Ascending aorta (tissue), 2 donors: ENCODE measurements at regions of chr16 and their contacts with region 1.

Region 1: GRCh38 chr16:88856828-88857733 is at the starts of genes GALNS and TRAPPC2L:
- DNase-seq: peak; percentile 92 to 99
- H3K4me3 ChIP-seq: peak within 1 kb of the TSS; percentile 64 to 87
- H3K27ac ChIP-seq: peak within 1 kb of the TSS; percentile 54 to 66
- H3K4me1 ChIP-seq: peaks cover 13 to 14% of the 10 kb centered on the region in 2 donors
- H3K27me3 ChIP-seq: no peaks in the 10 kb centered on the region
- CTCF ChIP-seq: no peak
- total RNA-seq, gene GALNS: 62.2 TPM
- total RNA-seq, gene TRAPPC2L: 7.6 TPM

Region 2: DNA sequence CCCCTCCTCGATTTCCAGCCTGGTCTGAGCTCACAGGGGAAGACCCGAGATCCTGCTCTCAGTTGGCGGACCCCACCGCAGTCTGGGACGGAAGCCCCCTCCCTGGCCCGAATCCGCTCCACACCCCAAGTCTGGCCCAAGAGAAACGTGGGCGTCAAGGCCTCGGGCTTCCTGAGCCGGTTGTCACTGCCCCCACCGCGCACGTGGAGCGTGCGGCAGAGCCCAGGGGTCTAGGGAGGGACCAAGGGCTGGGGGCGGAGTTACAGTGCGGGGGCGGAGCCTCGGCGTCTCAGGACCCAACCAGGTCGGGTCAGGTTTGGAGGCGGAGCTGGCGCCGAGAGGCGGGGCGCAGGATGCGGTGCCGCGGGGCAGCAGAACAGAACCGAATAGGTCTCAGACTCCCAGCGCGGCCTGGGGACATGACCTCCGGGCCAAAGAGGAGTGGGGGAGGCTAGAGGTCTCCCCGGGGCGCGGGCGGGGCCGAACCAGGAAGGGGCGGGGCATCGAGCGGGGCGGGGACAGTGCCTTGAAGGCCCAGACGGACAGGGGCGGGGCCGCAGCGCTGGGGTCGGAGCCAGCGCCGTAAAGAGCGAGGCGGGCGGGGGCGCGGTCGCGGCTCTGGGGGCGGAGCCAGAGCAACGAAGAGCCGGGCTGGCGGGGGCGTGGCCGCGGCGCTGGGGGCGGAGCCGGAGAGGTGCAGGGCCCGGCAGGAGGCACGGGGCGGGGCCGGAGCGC is 404.4 kb before region 1 on chr16:
- intact Hi-C with region 1: loop called (anchors 5 kb)
- DNase-seq: peak; percentile 84 to 98
- H3K4me3 ChIP-seq: peak overlapping the region; percentile 75 to 84
- H3K27ac ChIP-seq: peak overlapping the region; percentile 56 to 58
- H3K4me1 ChIP-seq: peaks cover 7 to 24% of the 10 kb centered on the region in 2 donors
- H3K27me3 ChIP-seq: no peaks in the 10 kb centered on the region
- CTCF ChIP-seq: no peak

Region 3: GRCh38 chr16:88811769-88812512 is 45.1 kb before region 1 on chr16 and contains the start of gene APRT:
- intact Hi-C with region 1: loop called (anchors 1 kb)
- DNase-seq: peak; percentile 65 to 96
- H3K4me3 ChIP-seq: peak within 1 kb of the TSS; percentile 80 to 83
- H3K27ac ChIP-seq: peak within 1 kb of the TSS; percentile 86 to 93
- H3K4me1 ChIP-seq: peaks cover 8 to 21% of the 10 kb centered on the region in 2 donors
- H3K27me3 ChIP-seq: no peaks in the 10 kb centered on the region
- CTCF ChIP-seq: peak in 2 of 3 experiments; percentile 41 to 44
- total RNA-seq, gene APRT: 305 TPM

Region 4: GRCh38 chr16:88939972-88940861 is 83.1 kb after region 1 on chr16:
- intact Hi-C with region 1: no loop called
- DNase-seq: no peak
- H3K4me3 ChIP-seq: peak overlapping the region; percentile 26 to 66
- H3K27ac ChIP-seq: no peak overlapping the region
- H3K4me1 ChIP-seq: peaks cover 2 to 6% of the 10 kb centered on the region in 2 donors
- H3K27me3 ChIP-seq: peaks cover 7% of the 10 kb centered on the region
- CTCF ChIP-seq: no peak

Region 5: GRCh38 chr16:89009311-89010209 is 152.5 kb after region 1 on chr16:
- intact Hi-C with region 1: no loop called
- DNase-seq: no peak
- H3K4me3 ChIP-seq: no peak overlapping the region
- H3K27ac ChIP-seq: no peak overlapping the region
- H3K4me1 ChIP-seq: no peaks in the 10 kb centered on the region
- H3K27me3 ChIP-seq: no peaks in the 10 kb centered on the region
- CTCF ChIP-seq: no peak